GM12878 (cell line): ENCODE measurements at regions of chr2 and their contacts with region 1.

Region 1: GRCh38 chr2:152025678-152026287 is 73.1 kb downstream of the CACNB4 start:
- DNase-seq: peak; percentile 63
- ATAC-seq: peak; percentile 98
- H3K4me3 ChIP-seq: no peak overlapping the region
- H3K27ac ChIP-seq: no peak overlapping the region
- H3K4me1 ChIP-seq: peaks cover 10% of the 10 kb centered on the region
- H3K27me3 ChIP-seq: no peaks in the 10 kb centered on the region
- CTCF ChIP-seq: peak; percentile 71 to 98 (median 92)
- EP300 ChIP-seq: no peak
- POLR2A ChIP-seq: no peak
- RAD21 ChIP-seq: peak; percentile 71

Region 2: DNA sequence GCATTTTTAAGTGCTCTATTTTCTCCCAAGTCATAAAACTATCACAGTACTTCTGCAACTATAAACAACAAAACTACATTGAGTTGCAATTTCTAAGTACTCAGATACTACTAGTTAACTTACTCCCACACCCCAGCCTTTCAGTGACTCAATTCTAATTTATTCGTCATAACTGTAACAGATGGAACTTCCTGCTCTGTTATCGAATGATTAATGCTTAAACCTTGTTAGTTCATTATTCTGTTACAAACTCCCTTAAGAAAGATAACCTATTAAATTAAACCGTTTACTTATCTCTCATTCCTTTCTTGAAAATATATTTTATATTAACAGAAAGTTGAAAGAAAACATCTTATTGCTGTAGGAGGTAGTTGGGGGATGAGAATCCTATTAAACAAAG is 651.4 kb before region 1 on chr2:
- CTCF ChIA-PET with region 1: no interaction called
- POLR2A ChIA-PET with region 1: no interaction called
- RAD21 ChIA-PET with region 1: no interaction called
- SMC1A ChIA-PET with region 1: no interaction called
- in situ Hi-C with region 1: no loop called
- intact Hi-C with region 1: no loop called
- DNase-seq: no peak
- ATAC-seq: peak; percentile 96
- H3K4me3 ChIP-seq: no peak overlapping the region
- H3K27ac ChIP-seq: no peak overlapping the region
- H3K4me1 ChIP-seq: no peaks in the 10 kb centered on the region
- H3K27me3 ChIP-seq: no peaks in the 10 kb centered on the region
- CTCF ChIP-seq: no peak
- EP300 ChIP-seq: peak; percentile 15 to 43; a peak in 1 of 4 replicates
- POLR2A ChIP-seq: no peak
- RAD21 ChIP-seq: no peak

Region 3: DNA sequence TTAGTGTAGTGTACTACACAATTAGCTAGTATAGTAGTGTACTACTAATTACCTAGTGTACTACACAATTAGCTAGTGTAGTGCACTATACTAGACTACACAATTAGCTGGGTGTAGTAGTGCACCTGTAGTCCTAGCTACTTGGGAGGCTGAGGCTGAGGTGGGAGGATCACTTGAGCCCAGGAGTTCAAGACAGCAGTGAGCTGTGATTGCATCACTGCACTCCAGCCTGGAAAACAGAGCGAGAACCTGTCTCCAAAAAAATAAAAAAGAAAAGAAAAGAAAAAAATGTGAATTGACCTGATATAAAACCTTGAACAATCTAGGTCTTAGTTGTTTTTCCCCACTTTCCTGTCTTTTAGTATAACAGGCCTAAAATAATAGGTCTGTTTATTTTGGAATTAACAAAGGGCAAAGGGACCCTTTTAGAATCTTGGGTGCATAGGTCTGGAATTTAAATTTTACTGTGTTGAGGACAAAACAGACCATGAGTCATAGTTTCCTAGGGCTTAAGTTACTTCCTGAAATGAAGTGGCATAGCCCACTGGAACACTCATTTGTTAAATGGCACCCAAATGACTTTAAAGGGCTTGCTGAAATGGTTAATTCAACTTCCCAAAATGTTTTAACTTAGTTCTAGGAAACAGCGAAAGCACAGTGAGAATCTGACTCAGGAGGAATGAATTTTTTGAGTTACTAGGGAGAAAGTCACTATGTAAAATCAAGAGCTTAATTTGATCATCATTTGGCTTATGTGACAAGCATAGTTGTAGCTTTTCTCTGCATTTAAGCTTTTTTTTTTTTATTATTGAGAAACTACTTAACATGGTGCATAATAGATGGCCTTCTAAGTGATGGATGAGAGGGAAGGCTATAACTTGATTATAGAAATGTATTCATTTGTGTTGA is 146.9 kb before region 1 on chr2:
- CTCF ChIA-PET with region 1: interaction called, 10 read pairs
- POLR2A ChIA-PET with region 1: no interaction called
- RAD21 ChIA-PET with region 1: no interaction called
- SMC1A ChIA-PET with region 1: interaction called, 4 read pairs
- in situ Hi-C with region 1: no loop called
- intact Hi-C with region 1: no loop called
- DNase-seq: no peak
- ATAC-seq: no peak; the same call in 2 of the 3 replicates
- H3K4me3 ChIP-seq: no peak overlapping the region
- H3K27ac ChIP-seq: no peak overlapping the region
- H3K4me1 ChIP-seq: no peaks in the 10 kb centered on the region
- H3K27me3 ChIP-seq: no peaks in the 10 kb centered on the region
- CTCF ChIP-seq: no peak
- EP300 ChIP-seq: no peak
- POLR2A ChIP-seq: no peak
- RAD21 ChIP-seq: no peak

Region 4: DNA sequence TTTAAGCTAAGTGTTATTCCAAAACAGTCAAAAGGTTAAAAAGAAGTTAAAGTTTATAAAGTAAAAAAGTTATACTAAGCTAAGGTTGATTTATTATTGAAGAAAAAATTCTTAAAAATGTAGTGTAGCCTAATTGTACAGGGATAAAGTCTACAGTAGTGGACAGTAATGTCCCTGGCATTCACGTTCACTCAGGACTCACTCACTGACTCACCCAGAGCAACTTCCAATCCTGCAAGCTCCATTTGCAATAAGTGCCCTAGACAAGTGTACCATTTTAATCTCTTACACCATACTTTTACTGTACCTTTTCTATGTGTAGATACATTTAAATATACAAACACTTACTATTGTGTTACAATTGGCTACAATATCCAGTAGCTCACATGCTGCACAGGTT is 13.1 kb before region 1 on chr2:
- CTCF ChIA-PET with region 1: interaction called, 81 read pairs
- POLR2A ChIA-PET with region 1: no interaction called
- RAD21 ChIA-PET with region 1: no interaction called
- SMC1A ChIA-PET with region 1: interaction called, 9 read pairs
- in situ Hi-C with region 1: no loop called
- intact Hi-C with region 1: no loop called
- DNase-seq: no peak
- ATAC-seq: no peak
- H3K4me3 ChIP-seq: no peak overlapping the region
- H3K27ac ChIP-seq: no peak overlapping the region
- H3K4me1 ChIP-seq: no peaks in the 10 kb centered on the region
- H3K27me3 ChIP-seq: peaks cover 0 to 4% of the 10 kb centered on the region in 2 experiments; a peak in 1 of 4 replicates
- CTCF ChIP-seq: no peak
- EP300 ChIP-seq: no peak
- POLR2A ChIP-seq: no peak
- RAD21 ChIP-seq: no peak

Region 5: GRCh38 chr2:152042636-152043615 is 17.1 kb after region 1 on chr2:
- CTCF ChIA-PET with region 1: interaction called, 56 read pairs
- POLR2A ChIA-PET with region 1: no interaction called
- RAD21 ChIA-PET with region 1: interaction called, 7 read pairs
- SMC1A ChIA-PET with region 1: interaction called, 5 read pairs
- in situ Hi-C with region 1: no loop called
- intact Hi-C with region 1: no loop called
- DNase-seq: no peak
- ATAC-seq: no peak
- H3K4me3 ChIP-seq: no peak overlapping the region
- H3K27ac ChIP-seq: no peak overlapping the region
- H3K4me1 ChIP-seq: peaks cover 25% of the 10 kb centered on the region
- H3K27me3 ChIP-seq: no peaks in the 10 kb centered on the region
- CTCF ChIP-seq: no peak
- EP300 ChIP-seq: no peak
- POLR2A ChIP-seq: no peak
- RAD21 ChIP-seq: no peak